ENCODE measurements at regions of chr17 and their contacts with region 1.

Region 1: DNA sequence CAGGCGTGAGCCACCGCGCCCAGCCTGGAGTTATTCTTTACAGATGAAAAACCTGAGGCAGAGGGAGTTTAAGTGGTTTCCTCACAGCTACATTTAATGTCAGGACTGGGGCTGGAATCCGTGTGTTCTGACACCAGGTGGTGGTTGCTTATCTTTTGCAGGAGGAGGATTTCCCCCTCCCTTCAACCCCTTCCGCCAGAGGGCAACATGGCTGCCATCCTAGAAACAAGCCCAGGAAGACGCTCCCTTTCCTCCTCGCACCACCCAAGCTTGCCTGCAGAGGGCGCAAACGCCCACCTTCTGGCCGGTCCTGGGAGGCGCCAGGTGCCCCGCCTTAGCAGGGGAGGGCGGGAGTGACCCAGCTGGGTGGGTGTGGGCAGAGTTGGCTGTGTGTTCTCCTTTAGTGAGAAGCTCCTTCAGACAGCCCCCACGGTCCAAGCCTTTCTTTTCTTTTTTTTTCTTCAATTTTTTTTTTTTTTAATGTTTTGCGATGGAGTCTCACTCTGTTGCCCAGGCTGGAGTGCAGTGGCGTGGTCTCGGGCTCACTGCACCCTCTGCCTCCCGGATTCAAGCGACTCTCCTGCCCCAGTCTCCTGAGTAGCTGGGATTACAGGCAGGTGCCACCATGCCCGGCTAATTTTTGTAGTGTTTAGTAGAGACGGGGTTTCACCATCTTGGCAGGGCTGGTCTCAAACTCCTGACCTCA is 9.9 kb upstream of the RAP1GAP2 start:
- DNase-seq: peak; percentile 93
- ATAC-seq: peak; percentile 98
- H3K4me3 Mint-ChIP-seq: no peak overlapping the region
- H3K27ac Mint-ChIP-seq: peak overlapping the region; percentile 46
- H3K4me1 Mint-ChIP-seq: peaks cover 15% of the 10 kb centered on the region
- H3K27me3 Mint-ChIP-seq: peaks cover 33% of the 10 kb centered on the region

Region 2: GRCh38 chr17:2796164-2797125 is 10.1 kb after region 1 on chr17 and contains the start of gene RAP1GAP2:
- CTCF ChIA-PET with region 1: interaction called, 24 read pairs
- DNase-seq: peak; percentile 91
- ATAC-seq: peak; percentile 80
- H3K4me3 Mint-ChIP-seq: peak within 1 kb of the TSS; percentile 87
- H3K27ac Mint-ChIP-seq: peak within 1 kb of the TSS; percentile 59
- H3K4me1 Mint-ChIP-seq: peaks cover 72% of the 10 kb centered on the region
- H3K27me3 Mint-ChIP-seq: peaks cover 61% of the 10 kb centered on the region
- total RNA-seq, gene RAP1GAP2: 6.5 to 26.2 TPM

Region 3: GRCh38 chr17:2814481-2815341 is 28.4 kb after region 1 on chr17:
- CTCF ChIA-PET with region 1: interaction called, 120 read pairs
- DNase-seq: peak; percentile 97
- ATAC-seq: peak; percentile 84
- H3K4me3 Mint-ChIP-seq: peak overlapping the region; percentile 64
- H3K27ac Mint-ChIP-seq: peak overlapping the region; percentile 88
- H3K4me1 Mint-ChIP-seq: peaks cover 39% of the 10 kb centered on the region
- H3K27me3 Mint-ChIP-seq: peaks cover 40% of the 10 kb centered on the region

Region 4: DNA sequence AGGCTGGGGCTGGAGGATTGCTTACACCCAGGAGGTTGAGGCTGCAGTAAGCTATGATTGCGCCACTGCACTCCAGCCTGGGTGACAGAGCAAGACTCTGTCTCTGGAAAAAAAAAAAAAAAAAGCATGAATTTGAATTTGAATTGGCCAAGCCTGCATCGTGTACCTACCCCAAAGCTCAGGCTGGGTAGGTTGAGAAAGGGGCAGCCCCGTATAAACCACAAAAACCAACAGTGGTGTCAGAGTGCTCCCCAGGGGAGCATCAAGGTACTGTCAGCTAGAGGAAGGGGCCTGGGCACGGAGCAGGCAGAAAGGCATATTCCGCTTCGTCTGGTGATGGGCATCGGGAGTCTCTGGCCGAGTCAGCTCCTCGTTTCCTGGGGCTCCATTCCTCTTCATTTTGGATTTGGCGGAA is 50.8 kb after region 1 on chr17:
- CTCF ChIA-PET with region 1: interaction called, 28 read pairs
- DNase-seq: peak; percentile 60
- ATAC-seq: peak; percentile 61
- H3K4me3 Mint-ChIP-seq: no peak overlapping the region
- H3K27ac Mint-ChIP-seq: no peak overlapping the region
- H3K4me1 Mint-ChIP-seq: peaks cover 8% of the 10 kb centered on the region
- H3K27me3 Mint-ChIP-seq: peaks cover 14% of the 10 kb centered on the region

Region 5: GRCh38 chr17:3012926-3013581 is 226.7 kb after region 1 on chr17:
- CTCF ChIA-PET with region 1: interaction called, 18 read pairs
- DNase-seq: peak; percentile 65
- ATAC-seq: peak; percentile 70
- H3K4me3 Mint-ChIP-seq: no peak overlapping the region
- H3K27ac Mint-ChIP-seq: no peak overlapping the region
- H3K4me1 Mint-ChIP-seq: no peaks in the 10 kb centered on the region
- H3K27me3 Mint-ChIP-seq: no peaks in the 10 kb centered on the region

Measured in activated CD8-positive, alpha-beta memory T cell treated with anti-CD3 and anti-CD28 coated beads, Interleukin-2, amount 10 ng/mL, durations not matched to agents 7 days and 5 days (primary cell).